OCI-LY7 (cell line): ENCODE measurements at regions of chr7 and their contacts with region 1.

Region 1: GRCh38 chr7:37385787-37386186 is 62.9 kb downstream of the ELMO1 start:
- DNase-seq: no peak
- H3K4me3 ChIP-seq: no peak overlapping the region
- H3K27ac ChIP-seq: no peak overlapping the region
- H3K4me1 ChIP-seq: no peaks in the 10 kb centered on the region
- CTCF ChIP-seq: no peak

Region 2: GRCh38 chr7:35617041-35617440 is 1768.7 kb before region 1 on chr7:
- CTCF ChIA-PET with region 1: no interaction called
- POLR2A ChIA-PET with region 1: no interaction called
- intact Hi-C with region 1: loop called (anchors 10 kb)
- DNase-seq: no peak
- H3K4me3 ChIP-seq: no peak overlapping the region
- H3K27ac ChIP-seq: no peak overlapping the region
- H3K4me1 ChIP-seq: no peaks in the 10 kb centered on the region
- CTCF ChIP-seq: no peak

Region 3: GRCh38 chr7:37784015-37784414 is 398.2 kb after region 1 on chr7:
- CTCF ChIA-PET with region 1: no interaction called
- POLR2A ChIA-PET with region 1: no interaction called
- intact Hi-C with region 1: no loop called
- DNase-seq: no peak
- H3K4me3 ChIP-seq: no peak overlapping the region
- H3K27ac ChIP-seq: no peak overlapping the region
- H3K4me1 ChIP-seq: no peaks in the 10 kb centered on the region
- CTCF ChIP-seq: no peak